ENCODE measurements at regions of chr15 and their contacts with region 1.

Region 1: GRCh38 chr15:64651573-64652260 is 123.7 kb downstream of the RBPMS2 start:
- DNase-seq: peak; percentile 33
- ATAC-seq: peak; percentile 61
- H3K4me3 ChIP-seq: no peak overlapping the region
- H3K27ac ChIP-seq: no peak overlapping the region
- H3K4me1 ChIP-seq: peaks cover 7% of the 10 kb centered on the region
- H3K27me3 ChIP-seq: no peaks in the 10 kb centered on the region
- CTCF ChIP-seq: no peak
- POLR2A ChIP-seq: no peak
- RAD21 ChIP-seq: no peak

Region 2: DNA sequence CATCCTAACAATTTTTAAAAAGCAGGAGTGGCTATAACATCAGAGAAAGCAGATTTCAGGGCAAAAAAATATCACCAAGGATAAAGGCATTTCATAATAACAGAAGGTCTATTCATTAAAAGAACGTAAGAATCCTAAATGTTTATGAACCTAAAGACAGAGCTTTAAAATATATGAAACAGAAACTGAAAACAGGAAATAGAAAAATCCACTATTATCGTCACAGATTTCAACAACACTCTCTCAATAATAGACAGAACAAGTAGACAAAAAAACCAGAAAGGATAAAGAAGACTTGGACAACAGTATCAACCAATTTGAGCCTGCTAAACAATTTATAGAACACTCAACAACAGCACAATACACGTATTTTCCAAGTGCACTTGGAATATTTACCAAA is 983.1 kb before region 1 on chr15:
- CTCF ChIA-PET with region 1: no interaction called
- POLR2A ChIA-PET with region 1: interaction called, 11 read pairs
- dilution Hi-C with region 1: no loop called
- in situ Hi-C with region 1: no loop called
- intact Hi-C with region 1: no loop called
- DNase-seq: no peak
- ATAC-seq: no peak
- H3K4me3 ChIP-seq: no peak overlapping the region
- H3K27ac ChIP-seq: no peak overlapping the region
- H3K4me1 ChIP-seq: no peaks in the 10 kb centered on the region
- H3K27me3 ChIP-seq: no peaks in the 10 kb centered on the region
- CTCF ChIP-seq: no peak
- POLR2A ChIP-seq: no peak
- RAD21 ChIP-seq: no peak

Region 3: DNA sequence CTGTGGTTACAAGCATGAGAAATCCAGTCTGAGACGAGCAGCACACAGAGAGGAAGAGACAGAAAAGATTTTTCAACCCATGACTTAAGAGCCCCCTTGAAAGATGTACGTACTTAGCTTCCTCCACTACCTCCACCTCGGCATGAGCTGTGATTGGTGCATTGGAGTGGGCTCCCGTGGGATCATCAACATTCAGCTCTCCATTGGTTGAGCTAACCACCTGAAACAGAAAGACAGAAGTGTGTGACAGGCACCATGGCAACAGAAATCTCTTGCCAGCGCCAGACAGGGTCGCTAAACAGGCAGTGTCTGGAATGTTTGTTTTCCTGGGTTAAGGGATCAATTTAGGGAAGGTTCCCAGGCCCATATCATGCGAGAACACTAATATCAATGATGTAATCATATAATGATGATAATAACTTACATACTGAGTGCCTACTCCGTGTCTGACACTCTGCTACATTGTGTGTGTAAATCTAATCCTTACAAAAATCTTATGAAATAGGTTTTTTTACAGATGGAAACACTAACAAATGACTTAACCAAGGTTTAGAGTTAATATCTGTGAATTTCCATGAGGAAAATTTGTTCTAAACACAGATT is 471.4 kb before region 1 on chr15:
- CTCF ChIA-PET with region 1: no interaction called
- POLR2A ChIA-PET with region 1: no interaction called
- dilution Hi-C with region 1: no loop called
- in situ Hi-C with region 1: loop called (anchors 25 kb)
- intact Hi-C with region 1: no loop called
- DNase-seq: no peak
- ATAC-seq: no peak
- H3K4me3 ChIP-seq: no peak overlapping the region
- H3K27ac ChIP-seq: no peak overlapping the region
- H3K4me1 ChIP-seq: no peaks in the 10 kb centered on the region
- H3K27me3 ChIP-seq: no peaks in the 10 kb centered on the region
- CTCF ChIP-seq: no peak
- POLR2A ChIP-seq: no peak
- RAD21 ChIP-seq: no peak

Region 4: GRCh38 chr15:64522226-64522823 is 129.4 kb before region 1 on chr15:
- CTCF ChIA-PET with region 1: no interaction called
- POLR2A ChIA-PET with region 1: no interaction called
- dilution Hi-C with region 1: no loop called
- in situ Hi-C with region 1: no loop called
- intact Hi-C with region 1: no loop called
- DNase-seq: no peak
- ATAC-seq: peak; percentile 48; the same call in 1 of the 2 replicates
- H3K4me3 ChIP-seq: no peak overlapping the region
- H3K27ac ChIP-seq: no peak overlapping the region
- H3K4me1 ChIP-seq: peaks cover 15% of the 10 kb centered on the region
- H3K27me3 ChIP-seq: no peaks in the 10 kb centered on the region
- CTCF ChIP-seq: no peak
- POLR2A ChIP-seq: no peak
- RAD21 ChIP-seq: no peak

Region 5: GRCh38 chr15:64619880-64620839 is 31.6 kb before region 1 on chr15:
- CTCF ChIA-PET with region 1: no interaction called
- POLR2A ChIA-PET with region 1: no interaction called
- dilution Hi-C with region 1: no loop called
- in situ Hi-C with region 1: no loop called
- intact Hi-C with region 1: loop called (anchors 1 kb)
- DNase-seq: peak; percentile 79
- ATAC-seq: peak; percentile 57
- H3K4me3 ChIP-seq: no peak overlapping the region
- H3K27ac ChIP-seq: no peak overlapping the region
- H3K4me1 ChIP-seq: peaks cover 6% of the 10 kb centered on the region
- H3K27me3 ChIP-seq: no peaks in the 10 kb centered on the region
- CTCF ChIP-seq: no peak
- POLR2A ChIP-seq: no peak
- RAD21 ChIP-seq: no peak

Measured in IMR-90 (cell line).